K562 (cell line): ENCODE measurements at regions of chr10 and their contacts with region 1.

Region 1: GRCh38 chr10:70430493-70431445 is 10.7 kb downstream of the NODAL start:
- DNase-seq: peak in 1 of 4 experiments; percentile 41
- ATAC-seq: peak; percentile 74
- H3K4me3 ChIP-seq: no peak overlapping the region
- H3K27ac ChIP-seq: no peak overlapping the region
- H3K4me1 ChIP-seq: no peaks in the 10 kb centered on the region
- H3K27me3 ChIP-seq: peaks cover 0 to 12% of the 10 kb centered on the region in 2 experiments; a peak in 3 of 5 replicates
- CTCF ChIP-seq: peak in 1 of 3 experiments; percentile 35; a peak in 2 of 6 replicates
- EP300 ChIP-seq: no peak
- POLR2A ChIP-seq: 0 out of 2 replicates have a peak, but pooled peaks have one; percentile 12
- RAD21 ChIP-seq: peak in 1 of 2 experiments; percentile 49; a peak in 2 of 4 replicates

Region 2: GRCh38 chr10:70198696-70199466 is 231.9 kb before region 1 on chr10:
- CTCF ChIA-PET with region 1: no interaction called
- POLR2A ChIA-PET with region 1: no interaction called
- in situ Hi-C with region 1: no loop called
- intact Hi-C with region 1: no loop called
- DNase-seq: no peak
- ATAC-seq: peak; percentile 46; the same call in 2 of the 3 replicates
- H3K4me3 ChIP-seq: no peak overlapping the region
- H3K27ac ChIP-seq: no peak overlapping the region
- H3K4me1 ChIP-seq: no peaks in the 10 kb centered on the region
- H3K27me3 ChIP-seq: no peaks in the 10 kb centered on the region
- CTCF ChIP-seq: peak in 1 of 3 experiments; percentile 29; a peak in 1 of 6 replicates
- EP300 ChIP-seq: no peak
- POLR2A ChIP-seq: no peak
- RAD21 ChIP-seq: no peak; a peak in 1 of 4 replicates

Region 3: GRCh38 chr10:70418229-70418628 is 12.5 kb before region 1 on chr10:
- CTCF ChIA-PET with region 1: no interaction called
- POLR2A ChIA-PET with region 1: interaction called, 11 read pairs
- in situ Hi-C with region 1: no loop called
- intact Hi-C with region 1: no loop called
- DNase-seq: no peak
- ATAC-seq: peak; percentile 54; the same call in 2 of the 3 replicates
- H3K4me3 ChIP-seq: no peak overlapping the region
- H3K27ac ChIP-seq: no peak overlapping the region
- H3K4me1 ChIP-seq: no peaks in the 10 kb centered on the region
- H3K27me3 ChIP-seq: no peaks in the 10 kb centered on the region
- CTCF ChIP-seq: no peak
- EP300 ChIP-seq: no peak
- POLR2A ChIP-seq: no peak
- RAD21 ChIP-seq: no peak